ENCODE measurements at regions of chr11 and their contacts with region 1.

Region 1: DNA sequence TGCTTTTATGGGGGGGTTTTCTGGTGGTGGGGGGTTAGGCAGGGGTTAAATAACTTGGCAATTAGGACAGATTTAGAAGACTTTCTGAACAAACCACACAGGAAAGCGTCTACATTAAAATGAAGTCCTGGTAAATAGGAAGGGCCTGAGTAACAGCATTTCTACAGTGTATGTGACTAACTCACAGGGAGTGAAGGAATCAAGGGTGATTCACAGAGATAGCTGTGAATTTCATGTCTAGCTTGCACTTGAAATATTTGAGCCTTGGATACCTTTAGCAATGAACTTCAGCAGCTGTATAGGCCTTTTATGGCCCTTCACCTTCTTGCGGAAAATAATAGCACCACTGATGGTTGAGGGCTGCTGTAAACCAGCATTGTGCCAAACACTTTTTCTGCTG is 26.1 kb upstream of the LDHA start:
- DNase-seq: no peak
- H3K4me3 ChIP-seq: no peak overlapping the region
- H3K27ac ChIP-seq: no peak overlapping the region
- H3K4me1 ChIP-seq: no peaks in the 10 kb centered on the region
- H3K27me3 ChIP-seq: no peaks in the 10 kb centered on the region
- CTCF ChIP-seq: no peak

Region 2: DNA sequence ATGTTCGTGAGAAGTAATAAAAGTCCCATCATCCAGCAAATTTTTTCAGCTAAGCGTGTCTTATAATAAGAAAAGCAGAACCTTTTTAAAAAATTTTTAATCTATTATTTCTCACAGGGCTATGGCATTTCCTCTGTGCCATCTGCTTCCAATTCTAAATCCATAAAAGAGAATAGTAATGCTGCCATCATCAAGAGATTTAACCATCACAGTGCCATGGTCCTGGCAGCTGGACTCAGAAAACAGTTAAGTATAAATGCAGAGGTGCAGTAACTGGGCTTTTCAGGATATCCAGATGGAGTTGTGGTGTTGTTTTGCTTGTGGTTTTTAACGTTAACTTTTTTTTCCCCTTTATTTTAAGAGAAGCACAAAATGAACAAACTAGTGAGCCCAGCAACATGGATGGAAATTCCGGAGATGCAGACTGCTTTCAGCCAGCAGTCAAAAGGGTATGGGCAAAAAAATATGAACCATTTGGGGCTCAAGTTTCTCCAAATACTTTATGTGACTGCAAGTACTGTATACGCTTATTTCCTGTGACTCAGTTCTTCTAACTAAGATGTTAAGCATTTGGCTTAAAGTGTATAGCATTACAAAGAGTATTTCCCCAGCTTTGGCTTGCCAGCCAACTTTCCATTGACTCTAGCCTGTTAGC is 20.6 kb before region 1 on chr11:
- CTCF ChIA-PET with region 1: no interaction called
- POLR2A ChIA-PET with region 1: interaction called, 13 read pairs
- intact Hi-C with region 1: no loop called
- DNase-seq: no peak
- H3K4me3 ChIP-seq: no peak overlapping the region
- H3K27ac ChIP-seq: no peak overlapping the region
- H3K4me1 ChIP-seq: no peaks in the 10 kb centered on the region
- H3K27me3 ChIP-seq: no peaks in the 10 kb centered on the region
- CTCF ChIP-seq: no peak

Region 3: DNA sequence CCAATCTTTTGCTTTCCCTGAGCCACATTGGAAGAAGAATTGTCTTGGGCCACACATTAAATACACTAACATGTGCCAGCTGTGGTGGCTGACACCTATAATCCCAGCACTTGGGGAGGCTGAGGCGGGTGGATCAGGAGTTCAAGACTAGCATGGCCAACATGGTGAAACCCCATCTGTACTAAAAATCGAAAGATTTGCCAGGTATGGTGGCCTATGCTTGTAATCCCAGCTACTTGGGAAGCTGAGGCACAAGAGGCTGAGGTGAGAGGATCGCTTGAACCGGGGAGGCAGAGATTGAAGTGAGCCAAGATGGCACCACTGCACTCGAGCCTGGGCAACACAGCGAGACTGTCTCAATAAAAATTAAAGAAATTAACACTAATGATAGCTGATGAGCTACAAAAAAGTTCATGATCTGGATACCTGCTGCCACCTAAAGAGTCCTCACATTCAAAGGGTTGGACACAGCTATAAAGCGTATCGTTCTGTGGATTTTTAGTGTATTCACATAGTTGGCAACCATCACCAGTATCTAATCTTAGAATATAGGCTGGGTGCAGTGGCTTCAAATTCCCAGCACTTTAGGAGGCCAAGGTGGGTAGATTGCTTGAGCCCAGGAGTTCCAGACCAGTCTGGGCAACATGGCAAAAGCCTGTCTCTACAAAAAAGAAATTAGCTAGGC is 40.5 kb after region 1 on chr11:
- CTCF ChIA-PET with region 1: no interaction called
- POLR2A ChIA-PET with region 1: no interaction called
- intact Hi-C with region 1: loop called (anchors 5 kb)
- DNase-seq: no peak
- H3K4me3 ChIP-seq: no peak overlapping the region
- H3K27ac ChIP-seq: peak overlapping the region; percentile 63
- H3K4me1 ChIP-seq: peaks cover 21% of the 10 kb centered on the region
- H3K27me3 ChIP-seq: no peaks in the 10 kb centered on the region
- CTCF ChIP-seq: no peak

Measured in PC-9 (cell line).